Natural killer cell (primary cell): ENCODE measurements at regions of chr2 and their contacts with region 1.

Region 1: DNA sequence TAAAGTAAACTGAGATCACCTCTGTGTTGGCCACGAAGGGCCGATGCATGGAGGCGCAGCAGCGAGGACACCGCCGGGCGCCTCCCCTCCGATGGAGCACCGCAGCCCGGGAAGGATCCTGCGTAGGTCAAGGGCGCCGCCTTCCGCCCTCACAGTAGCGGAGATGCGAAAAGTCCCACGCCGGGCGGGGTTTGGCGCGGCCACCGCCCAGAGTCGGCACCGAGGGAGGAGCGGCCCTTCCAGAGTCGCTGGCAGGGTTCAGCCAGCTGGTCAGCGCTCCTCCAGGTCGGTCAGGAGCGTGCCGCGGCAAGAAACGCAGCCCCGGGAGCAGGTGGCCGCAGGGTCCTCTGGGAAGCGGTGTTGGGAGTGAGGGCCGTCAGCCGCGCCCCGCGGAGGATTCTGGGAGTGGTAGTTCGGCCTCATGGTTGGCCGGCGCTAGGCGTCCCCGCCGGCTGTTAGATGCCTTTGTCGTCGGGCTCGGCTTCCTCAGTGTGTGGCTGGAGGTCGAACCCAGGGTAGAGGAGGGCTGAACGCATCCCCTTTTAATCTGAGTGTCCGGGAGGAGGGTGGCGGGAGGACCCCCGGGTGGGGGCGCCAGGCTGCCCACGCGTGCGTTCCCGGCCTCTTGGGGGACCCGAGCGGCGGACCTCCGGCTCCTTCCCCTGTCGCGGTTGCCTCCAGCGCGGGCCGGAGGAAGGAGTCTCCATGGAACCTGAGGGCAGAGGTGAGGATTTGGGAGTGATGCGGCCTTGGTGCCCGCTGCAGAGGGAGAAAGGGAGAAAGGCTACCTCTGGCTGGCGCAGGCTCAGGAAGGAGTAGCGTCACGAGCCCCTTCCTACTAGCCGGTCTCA is at the start of gene ZNF892:
- DNase-seq: peak; percentile 63 to 84
- ATAC-seq: peak; percentile 92 to 94 (median 94)
- H3K4me3 ChIP-seq: peak within 1 kb of the TSS; percentile 98
- H3K4me3 Mint-ChIP-seq: peak within 1 kb of the TSS; percentile 96
- H3K27ac ChIP-seq: peak within 1 kb of the TSS; percentile 90
- H3K27ac Mint-ChIP-seq: peak within 1 kb of the TSS; percentile 89 to 93
- H3K4me1 ChIP-seq: peaks cover 13% of the 10 kb centered on the region
- H3K4me1 Mint-ChIP-seq: peaks cover 22 to 28% of the 10 kb centered on the region in 2 donors
- H3K27me3 ChIP-seq: no peaks in the 10 kb centered on the region
- H3K27me3 Mint-ChIP-seq: no peaks in the 10 kb centered on the region
- CTCF ChIP-seq: peak; percentile 24
- total RNA-seq, gene ZNF892: 2.9 to 4.6 (median 3.2) TPM

Region 2: DNA sequence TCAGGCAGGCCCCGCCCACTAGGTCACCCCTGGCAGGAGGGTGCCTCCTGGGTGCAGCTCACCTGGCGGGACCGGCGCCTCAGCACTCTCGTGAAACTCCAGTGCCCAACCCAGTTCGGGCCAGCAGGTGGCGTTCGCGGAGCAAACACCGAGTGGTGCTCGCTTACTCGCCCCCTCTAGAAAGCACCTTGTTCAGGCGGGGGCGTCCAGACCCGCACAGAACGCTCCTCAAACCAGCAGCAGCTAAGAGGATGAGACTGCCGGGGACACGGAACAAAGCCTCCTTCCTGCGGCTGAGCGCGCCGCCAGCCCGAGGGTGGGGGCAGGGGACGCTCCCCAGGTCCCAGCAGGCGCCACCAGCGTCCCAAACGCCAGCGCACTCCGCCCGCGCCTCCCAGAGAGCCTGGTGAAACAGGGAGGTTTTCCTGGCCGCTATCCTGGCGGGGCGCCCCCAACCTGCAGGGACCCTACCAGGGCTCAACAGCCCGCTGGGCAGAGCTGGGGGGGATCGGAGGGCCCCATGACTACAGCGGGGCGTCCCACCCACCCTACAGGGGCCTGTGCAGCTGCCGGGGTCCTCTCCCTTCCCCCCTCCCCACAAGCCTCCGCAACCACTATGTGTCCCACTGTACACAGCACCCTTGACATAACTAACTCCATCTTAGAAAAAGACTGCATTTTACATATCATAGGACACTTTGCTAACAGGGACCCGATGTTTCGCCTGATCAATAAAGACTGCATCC is 130.4 kb before region 1 on chr2:
- intact Hi-C with region 1: loop called (anchors 5 kb)
- DNase-seq: peak; percentile 57 to 94
- ATAC-seq: peak; percentile 75 to 93 (median 91)
- H3K4me3 ChIP-seq: peak overlapping the region; percentile 23
- H3K4me3 Mint-ChIP-seq: peak overlapping the region; percentile 49
- H3K27ac ChIP-seq: no peak overlapping the region
- H3K27ac Mint-ChIP-seq: no peak overlapping the region
- H3K4me1 ChIP-seq: peaks cover 43% of the 10 kb centered on the region
- H3K4me1 Mint-ChIP-seq: peaks cover 5 to 6% of the 10 kb centered on the region in 2 donors
- H3K27me3 ChIP-seq: no peaks in the 10 kb centered on the region
- H3K27me3 Mint-ChIP-seq: peaks cover 12 to 14% of the 10 kb centered on the region in 2 donors
- CTCF ChIP-seq: peak; percentile 75

Region 3: DNA sequence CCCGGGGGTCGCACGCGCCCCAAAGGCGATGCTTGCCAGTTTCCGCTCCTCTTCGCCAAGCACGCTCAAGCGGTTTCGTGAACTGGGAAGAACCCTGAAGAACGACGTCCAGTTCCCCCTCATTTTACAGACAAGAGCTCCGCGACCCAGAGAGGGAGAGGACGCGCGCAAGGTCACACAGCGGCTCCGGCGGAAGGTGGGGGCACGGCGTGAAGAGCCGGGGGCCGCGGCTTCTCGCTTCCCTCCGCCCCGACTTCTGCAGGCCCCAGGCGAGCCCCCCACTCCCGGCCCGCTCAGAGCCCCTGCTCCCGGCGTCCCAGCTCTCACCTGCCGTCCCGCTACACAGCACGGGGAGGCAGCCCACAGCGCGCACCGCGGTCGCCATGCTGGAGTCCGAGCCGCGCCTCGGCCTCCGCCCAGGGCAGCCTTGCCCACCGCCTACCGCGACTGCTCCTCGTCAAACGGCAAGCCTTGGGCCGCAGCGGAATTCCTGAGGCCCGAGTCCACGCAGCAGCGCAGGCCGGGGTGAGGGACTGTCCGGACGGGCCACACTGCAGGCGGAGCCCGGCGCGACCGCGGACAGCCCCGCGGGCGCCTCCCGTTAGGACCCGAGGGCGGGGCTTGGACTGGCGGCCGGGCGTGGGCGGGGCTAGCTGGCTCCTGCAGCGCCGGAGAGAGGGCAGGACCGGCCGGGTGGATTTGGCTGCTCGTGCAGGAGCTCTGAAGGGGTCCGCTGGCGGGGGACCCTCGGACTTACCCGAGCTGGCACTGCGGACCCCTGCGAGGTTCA is 85.7 kb before region 1 on chr2 and contains the start of gene MRPS5:
- intact Hi-C with region 1: loop called (anchors 1 kb)
- DNase-seq: peak; percentile 86 to 87
- ATAC-seq: peak; percentile 96
- H3K4me3 ChIP-seq: peak within 1 kb of the TSS; percentile 97
- H3K4me3 Mint-ChIP-seq: peak within 1 kb of the TSS; percentile 96
- H3K27ac ChIP-seq: peak within 1 kb of the TSS; percentile 90
- H3K27ac Mint-ChIP-seq: peak within 1 kb of the TSS; percentile 90
- H3K4me1 ChIP-seq: peaks cover 19% of the 10 kb centered on the region
- H3K4me1 Mint-ChIP-seq: peaks cover 46 to 50% of the 10 kb centered on the region in 2 donors
- H3K27me3 ChIP-seq: peaks cover under 1% of the 10 kb centered on the region
- H3K27me3 Mint-ChIP-seq: peaks cover 0 to 3% of the 10 kb centered on the region in 2 donors
- CTCF ChIP-seq: no peak
- total RNA-seq, gene MRPS5: 26.4 to 40.0 (median 29.8) TPM

Region 4: DNA sequence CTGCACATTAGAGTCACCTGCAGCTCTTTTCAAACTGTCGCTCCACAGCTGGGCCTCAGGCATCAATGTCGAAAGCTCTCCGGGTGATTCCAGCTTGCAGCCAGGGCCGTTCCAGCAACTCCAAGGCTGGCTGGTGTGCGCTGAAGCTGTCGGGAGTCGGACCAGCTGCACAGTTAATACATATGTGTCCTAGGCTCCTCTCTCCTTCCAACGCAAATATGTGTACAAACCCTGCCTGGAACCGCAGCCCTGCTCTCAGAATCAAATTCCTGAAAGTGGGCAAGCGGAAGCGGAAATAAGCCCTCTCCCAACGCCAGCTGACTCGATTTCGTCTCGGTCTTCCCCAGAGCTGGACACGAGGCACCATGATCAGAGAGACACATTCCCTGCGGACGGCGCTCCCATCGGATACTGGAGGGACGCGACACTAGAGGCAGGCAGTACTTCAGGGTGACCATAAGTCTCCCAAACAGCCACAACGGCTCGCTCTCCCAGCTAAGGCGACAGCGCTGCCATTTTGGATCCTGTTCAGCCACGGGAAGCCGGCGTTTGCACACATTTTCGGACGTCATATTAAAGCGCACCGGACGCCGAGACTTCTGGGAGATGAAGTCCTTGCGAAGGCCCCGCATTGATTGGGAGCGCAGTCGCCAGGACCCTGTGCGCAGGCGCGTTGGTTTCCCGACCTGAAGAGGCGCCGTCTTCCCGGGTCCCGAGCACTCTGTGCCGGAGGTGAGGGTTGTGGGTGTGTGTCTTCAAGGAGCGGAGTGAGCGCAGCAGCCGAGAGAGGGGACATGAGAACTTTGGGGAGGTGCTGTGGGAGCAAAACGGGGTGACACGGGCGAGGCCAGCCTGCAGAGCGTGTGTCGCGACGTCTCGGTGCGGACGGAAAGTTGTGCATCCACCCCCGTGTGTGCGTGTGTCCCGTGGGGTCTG is 41.9 kb before region 1 on chr2 and contains the start of gene ZNF2:
- intact Hi-C with region 1: loop called (anchors 1 kb)
- DNase-seq: peak; percentile 95 to 99
- ATAC-seq: peak; percentile 94 to 96 (median 95)
- H3K4me3 ChIP-seq: peak within 1 kb of the TSS; percentile 97
- H3K4me3 Mint-ChIP-seq: peak within 1 kb of the TSS; percentile 100
- H3K27ac ChIP-seq: peak within 1 kb of the TSS; percentile 94
- H3K27ac Mint-ChIP-seq: peak within 1 kb of the TSS; percentile 95 to 98
- H3K4me1 ChIP-seq: peaks cover 12% of the 10 kb centered on the region
- H3K4me1 Mint-ChIP-seq: peaks cover 19 to 28% of the 10 kb centered on the region in 2 donors
- H3K27me3 ChIP-seq: no peaks in the 10 kb centered on the region
- H3K27me3 Mint-ChIP-seq: no peaks in the 10 kb centered on the region
- CTCF ChIP-seq: no peak
- total RNA-seq, gene ZNF2: 0.96 to 2.7 (median 2.4) TPM

Region 5: DNA sequence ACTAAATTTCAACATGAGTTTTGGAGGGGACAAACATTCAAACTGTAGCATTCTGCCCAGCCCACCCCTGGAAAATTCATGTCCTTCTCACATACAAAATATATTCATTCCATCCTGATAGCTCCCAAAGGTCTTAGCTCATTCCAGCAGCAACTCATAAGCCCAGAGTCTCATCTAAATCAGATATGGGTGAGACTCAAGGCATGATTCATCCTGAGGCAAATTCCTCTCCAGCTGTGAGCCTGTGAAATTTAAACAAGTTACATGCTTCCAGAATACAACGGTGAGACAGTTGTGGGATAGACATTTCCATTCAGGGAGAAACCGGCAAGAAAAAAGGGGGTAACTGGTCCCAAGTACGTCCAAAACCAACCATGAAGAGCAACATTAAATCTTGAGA is 151.7 kb after region 1 on chr2:
- intact Hi-C with region 1: no loop called
- DNase-seq: no peak
- ATAC-seq: no peak
- H3K4me3 ChIP-seq: no peak overlapping the region
- H3K4me3 Mint-ChIP-seq: no peak overlapping the region
- H3K27ac ChIP-seq: no peak overlapping the region
- H3K27ac Mint-ChIP-seq: no peak overlapping the region
- H3K4me1 ChIP-seq: no peaks in the 10 kb centered on the region
- H3K4me1 Mint-ChIP-seq: no peaks in the 10 kb centered on the region
- H3K27me3 ChIP-seq: no peaks in the 10 kb centered on the region
- H3K27me3 Mint-ChIP-seq: peaks cover 0 to 6% of the 10 kb centered on the region in 2 donors
- CTCF ChIP-seq: no peak